Activated T-helper 1 cell treated with anti-CD3 and anti-CD28 coated beads, Interleukin-12 subunit alpha, Interleukin-12 subunit beta, Interleukin-2, Interleukin-4 antibody, amounts not matched to agents 30 ng/mL and 10 ng/mL and 1 ng/mL, durations not matched to agents 14 hours and 24 hours and 36 hours (primary cell): ENCODE measurements at regions of chr6 and their contacts with region 1.

Region 1: GRCh38 chr6:137271245-137272183 is 52.3 kb upstream of the IFNGR1 start:
- DNase-seq: no peak
- H3K4me3 Mint-ChIP-seq: no peak overlapping the region
- H3K27ac Mint-ChIP-seq: no peak overlapping the region
- H3K4me1 Mint-ChIP-seq: peaks cover 13% of the 10 kb centered on the region
- H3K27me3 Mint-ChIP-seq: peaks cover 31% of the 10 kb centered on the region

Region 2: DNA sequence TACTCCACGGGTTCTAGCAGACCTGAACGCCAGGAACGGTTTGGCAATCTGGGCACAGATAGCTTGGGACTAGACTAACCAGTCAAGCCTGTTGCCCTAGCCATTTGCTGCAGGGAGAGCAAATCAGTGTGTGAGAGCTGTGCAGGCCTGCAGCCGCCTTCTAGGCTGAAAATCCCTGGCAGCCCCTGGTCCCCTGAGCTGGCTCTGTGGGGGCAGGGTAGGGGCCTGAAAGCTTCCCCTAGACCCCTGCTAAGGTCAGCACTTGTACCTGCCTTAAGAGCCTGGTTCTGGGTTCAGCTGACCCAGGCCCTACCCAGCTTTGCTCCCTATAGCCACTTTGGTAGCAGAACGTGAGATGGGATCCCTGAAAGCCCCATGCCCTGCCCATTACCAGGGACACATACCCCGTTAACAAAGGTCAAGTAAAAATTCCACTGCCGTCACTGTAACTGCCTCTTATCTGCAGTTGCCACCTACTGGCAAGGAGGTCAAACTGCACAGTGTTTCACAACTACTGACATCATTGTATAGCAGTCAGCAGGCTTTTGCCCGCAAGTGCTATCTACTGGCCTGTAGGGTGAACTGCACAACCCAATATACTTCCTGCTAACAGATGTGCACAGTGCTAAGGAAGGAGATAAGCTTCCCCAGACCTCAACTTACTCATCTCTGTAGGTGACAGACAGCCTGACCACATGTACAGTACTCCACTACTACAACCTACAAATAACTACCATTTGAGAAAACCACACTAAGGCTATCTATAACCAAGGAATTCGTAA is 317.7 kb after region 1 on chr6:
- intact Hi-C with region 1: loop called (anchors 1 kb)
- DNase-seq: peak; percentile 40
- H3K4me3 Mint-ChIP-seq: no peak overlapping the region
- H3K27ac Mint-ChIP-seq: no peak overlapping the region
- H3K4me1 Mint-ChIP-seq: peaks cover 8% of the 10 kb centered on the region
- H3K27me3 Mint-ChIP-seq: peaks cover 22% of the 10 kb centered on the region

Region 3: GRCh38 chr6:138001750-138002349 is 730.3 kb after region 1 on chr6:
- intact Hi-C with region 1: loop called (anchors 10 kb)
- DNase-seq: peak; percentile 38
- H3K4me3 Mint-ChIP-seq: no peak overlapping the region
- H3K27ac Mint-ChIP-seq: no peak overlapping the region
- H3K4me1 Mint-ChIP-seq: peaks cover 27% of the 10 kb centered on the region
- H3K27me3 Mint-ChIP-seq: peaks cover 6% of the 10 kb centered on the region